Posterior vena cava (tissue), 2 donors: ENCODE measurements at regions of chr2 and their contacts with region 1.

Region 1: DNA sequence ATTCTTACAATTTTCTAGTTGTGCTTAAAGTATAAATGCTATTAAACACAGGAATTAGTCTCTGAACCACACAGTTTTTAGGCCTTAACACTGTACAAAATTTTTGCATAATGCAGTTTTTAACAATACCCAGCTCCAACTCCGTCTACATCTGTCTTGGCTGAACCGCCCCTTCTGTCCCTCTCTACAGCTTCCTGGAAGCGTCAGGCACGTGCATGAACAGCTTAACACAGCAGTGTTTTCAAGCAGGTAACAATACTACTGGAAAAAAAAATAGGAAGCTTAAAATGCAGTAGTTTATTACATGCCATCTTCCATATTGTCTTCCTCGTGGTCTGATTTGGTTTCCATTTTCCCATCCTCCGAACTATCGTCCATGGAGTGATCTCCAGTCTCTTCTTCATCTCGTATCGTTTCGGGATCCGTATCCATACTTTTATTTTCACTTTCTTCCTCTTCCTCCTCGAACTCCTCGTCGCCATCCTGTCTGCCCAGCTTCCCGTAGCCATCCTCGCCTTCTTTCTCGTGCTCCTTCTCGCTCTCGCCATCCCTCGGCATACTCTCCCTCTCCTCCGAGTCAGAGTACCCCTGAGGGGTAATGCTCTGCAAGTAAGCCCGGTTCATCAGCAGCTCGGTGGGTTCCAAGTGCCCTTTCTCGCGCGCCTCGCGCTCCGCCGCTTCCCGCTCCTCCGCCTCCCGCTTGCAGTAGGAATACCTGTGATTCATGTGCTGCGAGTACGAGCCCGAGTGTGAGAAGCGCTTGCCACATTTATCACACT is 130.6 kb downstream of the ZEB2 start:
- DNase-seq: no peak

Region 2: GRCh38 chr2:144362401-144362800 is 26.9 kb before region 1 on chr2:
- intact Hi-C with region 1: loop called in 1 of 2 experiments (anchors 1 kb)
- DNase-seq: no peak

Region 3: DNA sequence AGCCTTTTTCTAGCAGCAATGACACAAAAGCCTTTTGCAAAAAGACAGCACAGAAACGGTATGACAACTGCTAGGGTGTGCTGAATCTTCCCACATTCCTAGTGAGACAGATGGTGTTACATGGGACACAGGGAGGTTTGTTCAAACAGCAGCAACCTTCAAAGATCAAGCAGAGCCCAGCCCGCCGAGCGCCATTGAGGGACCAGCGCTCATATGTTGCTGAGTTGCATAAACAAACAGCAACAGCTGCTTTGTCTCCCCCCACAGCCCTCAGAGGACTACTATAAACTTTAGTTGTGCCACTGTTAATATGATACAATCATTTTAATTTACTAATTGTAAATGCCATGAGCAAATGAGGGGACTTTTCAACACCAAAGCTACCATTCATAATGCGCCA is 12.9 kb after region 1 on chr2:
- intact Hi-C with region 1: no loop called
- DNase-seq: no peak